Breast epithelium (tissue), 4 donors: ENCODE measurements at regions of chr7 and their contacts with region 1.

Region 1: DNA sequence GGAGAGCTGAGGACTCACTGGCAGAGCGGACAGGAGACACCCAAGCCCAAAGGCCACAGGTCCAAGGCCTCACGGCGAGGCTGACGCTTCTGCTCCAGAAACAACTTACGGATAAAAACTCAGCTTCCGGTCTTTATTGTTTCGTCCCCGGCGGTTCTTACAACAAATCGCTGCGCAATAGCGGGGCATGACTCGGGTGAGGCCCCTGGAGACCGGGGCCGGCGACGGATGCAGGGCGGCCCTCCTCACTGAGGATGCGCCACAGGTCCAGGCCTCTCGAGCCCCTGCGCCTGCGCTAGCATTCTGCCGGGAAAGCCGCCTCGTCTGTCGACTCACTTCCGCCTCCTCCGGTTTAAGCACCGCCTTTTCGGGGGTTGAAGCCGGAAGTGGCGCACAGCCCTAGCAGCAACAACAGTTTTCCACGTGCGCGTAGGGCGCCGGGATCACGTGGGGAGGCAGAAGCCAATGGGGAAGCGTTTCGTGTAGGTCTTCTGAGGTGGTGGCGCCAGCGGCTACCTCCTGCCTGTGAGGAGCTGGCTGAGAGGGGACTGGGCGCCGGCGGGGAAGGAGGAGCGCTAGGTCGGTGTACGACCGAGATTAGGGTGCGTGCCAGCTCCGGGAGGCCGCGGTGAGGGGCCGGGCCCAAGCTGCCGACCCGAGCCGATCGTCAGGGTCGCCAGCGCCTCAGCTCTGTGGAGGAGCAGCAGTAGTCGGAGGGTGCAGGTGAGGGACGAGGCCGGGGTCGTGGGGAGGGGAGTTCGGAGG is at the starts of genes DNAJB9 and THAP5:
- DNase-seq: peak; percentile 99
- H3K4me3 ChIP-seq: peak within 1 kb of the TSS; percentile 82 to 92 (median 82)
- H3K27ac ChIP-seq: peak within 1 kb of the TSS; percentile 98 to 99
- H3K4me1 ChIP-seq: no peaks in the 10 kb centered on the region
- H3K27me3 ChIP-seq: no peaks in the 10 kb centered on the region
- CTCF ChIP-seq: peak in 1 of 3 donors; percentile 28
- POLR2A ChIP-seq: peak; percentile 79
- total RNA-seq, gene DNAJB9: 36.3 to 51.2 (median 41.0) TPM
- total RNA-seq, gene THAP5: 19.4 to 35.6 (median 24.6) TPM

Region 2: GRCh38 chr7:108525985-108526767 is 43.4 kb before region 1 on chr7 and contains the start of gene PNPLA8:
- intact Hi-C with region 1: loop called (anchors 5 kb)
- DNase-seq: peak; percentile 99 to 100
- H3K4me3 ChIP-seq: peak within 1 kb of the TSS; percentile 66 to 72 (median 71)
- H3K27ac ChIP-seq: peak within 1 kb of the TSS; percentile 97 to 99
- H3K4me1 ChIP-seq: peaks cover 0 to 11% of the 10 kb centered on the region in 2 donors
- H3K27me3 ChIP-seq: no peaks in the 10 kb centered on the region
- CTCF ChIP-seq: peak in 2 of 3 donors; percentile 12 to 14
- POLR2A ChIP-seq: peak; percentile 67
- total RNA-seq, gene PNPLA8: 36.1 to 48.6 (median 48.5) TPM